ENCODE measurements at regions of chr13 and their contacts with region 1.

Region 1: DNA sequence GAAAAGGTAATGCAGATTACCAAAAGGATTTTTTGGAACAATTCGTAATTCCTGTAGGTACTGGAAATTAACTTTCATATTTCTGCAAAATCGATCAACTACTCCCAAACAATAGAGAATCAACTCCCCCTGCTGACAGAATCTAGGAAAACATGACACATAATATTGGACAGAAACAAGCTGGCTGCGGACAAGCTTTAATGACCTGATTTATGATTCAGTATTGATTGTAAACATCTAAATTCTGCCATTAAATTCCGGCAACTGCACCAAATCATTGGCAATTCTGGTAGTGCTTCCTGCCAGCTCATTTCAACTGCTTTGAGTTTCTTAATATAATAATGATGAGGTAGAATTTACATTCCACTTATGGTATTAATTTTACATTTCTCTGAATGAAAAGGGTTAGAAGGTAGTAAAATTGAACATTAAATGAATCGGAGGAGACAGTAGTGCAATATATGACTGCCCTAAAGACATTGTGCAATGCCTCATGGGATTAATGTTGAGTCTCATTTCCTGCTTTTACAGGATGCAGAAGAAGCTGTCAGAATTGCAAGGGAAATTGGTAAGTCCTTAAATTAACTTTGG is 146.5 kb downstream of the PCCA start:
- DNase-seq: no peak
- H3K4me3 Mint-ChIP-seq: no peak overlapping the region
- H3K27ac Mint-ChIP-seq: no peak overlapping the region
- H3K4me1 Mint-ChIP-seq: peaks cover 8% of the 10 kb centered on the region
- H3K27me3 Mint-ChIP-seq: no peaks in the 10 kb centered on the region

Region 2: DNA sequence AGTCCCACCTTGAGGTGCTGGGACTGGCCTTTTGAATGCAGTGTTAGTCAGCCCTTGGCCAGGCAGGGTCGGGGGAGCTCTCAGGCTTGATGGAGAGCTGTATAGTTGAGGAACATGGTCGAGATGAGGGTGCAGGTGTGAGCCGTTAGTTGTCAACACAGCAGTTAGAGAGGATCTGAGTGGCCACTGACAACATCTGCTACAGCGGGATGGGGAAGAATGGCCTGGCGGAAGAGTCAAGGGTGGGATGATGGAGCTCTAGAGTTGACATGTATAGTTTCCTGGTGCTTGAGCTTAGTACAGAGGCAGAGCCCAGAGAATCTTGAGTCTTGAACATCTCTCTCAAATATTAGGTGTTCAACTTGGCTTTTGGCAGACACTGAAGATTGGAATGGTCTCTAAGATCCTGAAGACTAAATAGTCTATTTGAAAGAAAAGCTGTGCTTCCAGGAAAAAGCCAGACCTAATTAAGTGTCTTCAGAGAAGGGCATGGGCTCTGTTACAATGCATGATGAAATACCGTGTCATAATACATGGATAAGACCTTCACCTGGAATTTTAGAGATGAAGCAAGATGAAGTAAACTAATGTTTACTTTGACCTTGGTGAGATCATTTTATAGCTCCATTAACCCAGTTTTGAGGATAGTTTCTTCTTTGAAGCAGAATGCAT is 136.8 kb before region 1 on chr13:
- CTCF ChIA-PET with region 1: no interaction called
- POLR2A ChIA-PET with region 1: no interaction called
- DNase-seq: no peak
- H3K4me3 Mint-ChIP-seq: no peak overlapping the region
- H3K27ac Mint-ChIP-seq: no peak overlapping the region
- H3K4me1 Mint-ChIP-seq: peaks cover 7% of the 10 kb centered on the region
- H3K27me3 Mint-ChIP-seq: no peaks in the 10 kb centered on the region

Region 3: DNA sequence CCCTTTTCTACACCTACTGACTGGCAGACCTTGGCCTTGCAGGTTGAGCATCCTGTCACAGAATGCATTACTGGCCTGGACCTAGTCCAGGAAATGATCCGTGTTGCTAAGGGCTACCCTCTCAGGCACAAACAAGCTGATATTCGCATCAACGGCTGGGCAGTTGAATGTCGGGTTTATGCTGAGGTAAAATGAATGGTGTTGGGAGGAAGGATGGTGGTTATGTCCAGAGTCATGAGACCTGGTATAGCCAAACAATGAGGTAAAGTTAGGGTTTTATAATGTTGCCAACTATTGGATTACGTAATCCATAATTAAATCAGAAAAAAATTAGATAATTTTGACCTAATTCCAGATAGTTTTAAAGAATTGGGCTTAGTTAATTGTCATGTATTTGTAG is 66.0 kb after region 1 on chr13:
- CTCF ChIA-PET with region 1: no interaction called
- POLR2A ChIA-PET with region 1: no interaction called
- DNase-seq: no peak
- H3K4me3 Mint-ChIP-seq: no peak overlapping the region
- H3K27ac Mint-ChIP-seq: no peak overlapping the region
- H3K4me1 Mint-ChIP-seq: no peaks in the 10 kb centered on the region
- H3K27me3 Mint-ChIP-seq: no peaks in the 10 kb centered on the region

Region 4: DNA sequence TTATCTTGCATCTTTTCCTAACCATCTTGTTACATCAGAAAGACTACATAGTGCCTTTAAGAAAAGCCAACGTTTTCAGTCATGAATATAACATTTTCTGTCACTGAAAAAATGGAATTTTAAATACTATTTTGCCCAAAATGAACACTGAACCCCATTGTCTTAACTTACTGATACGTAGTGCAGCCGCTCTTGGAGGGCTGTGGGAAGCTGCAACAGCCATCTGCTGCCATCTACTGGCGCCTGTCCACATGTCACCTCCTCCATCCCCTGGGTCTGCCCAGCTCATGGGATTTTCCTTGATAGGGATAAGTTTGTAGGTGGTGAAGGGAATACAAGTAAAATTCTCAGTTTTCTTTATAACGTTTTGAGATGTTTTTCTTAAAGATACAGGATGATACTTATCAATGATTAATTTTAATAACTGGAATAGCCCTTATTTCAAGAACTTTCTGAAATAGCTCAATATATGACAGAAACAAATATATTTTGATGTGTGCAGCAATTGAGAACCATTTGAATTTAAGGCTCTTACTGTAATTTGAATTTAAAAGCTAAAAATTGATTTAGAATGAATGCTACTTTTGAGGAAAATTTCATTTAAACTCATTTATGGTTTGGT is 279.5 kb after region 1 on chr13:
- CTCF ChIA-PET with region 1: interaction called, 23 read pairs
- POLR2A ChIA-PET with region 1: no interaction called
- DNase-seq: peak; percentile 79
- H3K4me3 Mint-ChIP-seq: no peak overlapping the region
- H3K27ac Mint-ChIP-seq: no peak overlapping the region
- H3K4me1 Mint-ChIP-seq: peaks cover 27% of the 10 kb centered on the region
- H3K27me3 Mint-ChIP-seq: peaks cover 14% of the 10 kb centered on the region